ENCODE measurements at regions of chr6 and their contacts with region 1.

Region 1: DNA sequence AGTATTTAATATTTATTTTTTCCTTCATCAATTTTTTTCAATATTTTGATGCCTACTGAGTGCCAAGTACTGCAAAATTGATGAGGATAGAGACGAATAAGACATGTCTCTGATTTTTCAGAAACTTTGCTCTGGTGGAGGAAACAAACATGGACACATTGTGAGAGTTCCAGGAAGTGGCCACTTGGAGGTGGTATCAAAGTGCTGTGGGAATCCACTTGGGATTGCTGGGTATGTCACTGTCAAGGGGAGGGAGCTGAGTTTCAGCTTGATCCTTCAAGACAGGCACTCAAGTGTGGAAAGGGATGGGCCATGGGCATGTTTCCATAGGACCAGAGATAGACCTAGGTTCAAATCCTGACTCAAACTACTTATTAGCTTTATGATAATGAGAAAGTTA is 24.5 kb upstream of the ABCC10 start:
- DNase-seq: no peak
- H3K4me3 ChIP-seq: no peak overlapping the region
- H3K27ac ChIP-seq: no peak overlapping the region
- H3K4me1 ChIP-seq: peaks cover 28% of the 10 kb centered on the region
- H3K27me3 ChIP-seq: no peaks in the 10 kb centered on the region
- CTCF ChIP-seq: no peak

Region 2: DNA sequence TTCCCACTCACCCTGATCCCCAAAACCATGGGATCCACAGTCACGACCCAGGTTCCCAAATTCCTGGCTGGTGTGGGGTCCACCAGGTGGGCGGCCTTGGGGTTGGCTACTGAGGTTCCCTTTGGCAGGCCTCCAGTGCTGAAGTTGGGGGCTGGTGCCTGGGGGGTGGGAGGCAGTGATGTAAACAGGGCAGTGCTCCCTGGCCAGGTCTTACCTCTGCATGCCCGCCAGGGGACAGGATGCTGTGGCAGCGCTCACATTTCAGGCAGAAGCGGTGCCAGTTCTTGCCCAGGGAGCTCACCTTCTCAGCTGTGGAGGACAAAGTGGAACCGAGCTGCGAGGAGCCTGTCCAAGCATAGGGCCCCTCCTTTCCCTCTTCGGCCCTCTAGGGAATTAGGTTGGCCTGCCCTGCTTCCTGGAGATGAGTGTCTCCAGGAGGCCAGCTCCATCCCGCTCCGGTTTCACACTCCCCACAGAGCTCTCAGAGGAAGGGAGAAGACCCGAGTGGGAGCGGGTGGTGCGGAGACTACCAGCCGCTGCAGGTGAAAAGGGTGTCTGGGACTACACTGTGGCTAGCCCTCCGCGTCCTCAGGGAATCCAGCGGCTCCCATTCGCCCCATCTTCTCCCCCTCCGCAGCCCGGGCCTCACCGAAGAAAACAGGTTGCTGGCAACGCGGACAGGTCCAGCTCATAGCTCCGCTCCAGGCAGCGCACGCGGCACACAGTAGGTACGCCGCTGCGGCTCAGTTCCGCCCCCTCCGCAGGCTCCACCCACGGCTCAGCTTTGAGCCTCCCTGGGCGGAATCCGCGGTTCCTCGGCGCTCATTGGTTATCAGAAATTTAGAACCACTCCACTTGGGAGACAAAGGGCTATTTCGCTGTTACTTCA is 94.5 kb before region 1 on chr6 and contains the start of gene CRIP3:
- CTCF ChIA-PET with region 1: interaction called, 14 read pairs
- POLR2A ChIA-PET with region 1: no interaction called
- intact Hi-C with region 1: no loop called
- DNase-seq: peak; percentile 59 to 60
- H3K4me3 ChIP-seq: peak within 1 kb of the TSS; percentile 50; the same call in 1 of the 2 replicates
- H3K27ac ChIP-seq: no peak within 1 kb of the TSS
- H3K4me1 ChIP-seq: peaks cover 15% of the 10 kb centered on the region
- H3K27me3 ChIP-seq: no peaks in the 10 kb centered on the region
- CTCF ChIP-seq: peak; percentile 52
- total RNA-seq, gene CRIP3: 5.7 and 10.0 TPM in 2 replicates

Region 3: GRCh38 chr6:43506667-43507471 is 104.0 kb after region 1 on chr6:
- CTCF ChIA-PET with region 1: no interaction called
- POLR2A ChIA-PET with region 1: no interaction called
- intact Hi-C with region 1: no loop called
- DNase-seq: peak; percentile 62 to 77
- H3K4me3 ChIP-seq: no peak overlapping the region
- H3K27ac ChIP-seq: no peak overlapping the region
- H3K4me1 ChIP-seq: 0 out of 2 replicates have a peak, but pooled peaks cover 7% of the 10 kb centered on the region
- H3K27me3 ChIP-seq: no peaks in the 10 kb centered on the region
- CTCF ChIP-seq: peak; percentile 94

Region 4: GRCh38 chr6:44176762-44177509 is 774.1 kb after region 1 on chr6:
- CTCF ChIA-PET with region 1: no interaction called
- POLR2A ChIA-PET with region 1: no interaction called
- intact Hi-C with region 1: no loop called
- DNase-seq: no peak
- H3K4me3 ChIP-seq: no peak overlapping the region
- H3K27ac ChIP-seq: no peak overlapping the region
- H3K4me1 ChIP-seq: no peaks in the 10 kb centered on the region
- H3K27me3 ChIP-seq: no peaks in the 10 kb centered on the region
- CTCF ChIP-seq: no peak